ENCODE measurements at regions of chr2 and their contacts with region 1.

Region 1: DNA sequence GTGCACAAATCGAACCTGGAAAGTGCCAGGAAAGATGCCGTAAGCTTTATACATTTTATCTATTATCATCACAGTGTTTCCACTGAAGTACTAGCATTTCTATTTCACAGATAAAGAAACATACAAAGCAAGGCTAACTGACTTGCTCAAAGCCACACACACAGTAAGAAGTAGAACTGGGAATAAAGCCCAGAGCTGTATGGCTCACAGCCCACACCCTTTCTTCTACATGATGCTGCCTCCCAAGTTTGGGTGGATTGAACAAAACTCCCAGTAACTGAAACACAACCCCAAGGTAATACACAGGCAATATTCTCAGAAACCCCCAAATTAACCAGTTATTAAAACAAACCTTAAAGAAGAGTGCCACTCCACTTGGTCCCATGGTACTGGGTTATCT is 11.2 kb downstream of the SAP130 start:
- DNase-seq: no peak
- ATAC-seq: no peak
- H3K4me3 ChIP-seq: no peak overlapping the region
- H3K27ac ChIP-seq: no peak overlapping the region
- H3K4me1 ChIP-seq: no peaks in the 10 kb centered on the region
- H3K27me3 ChIP-seq: no peaks in the 10 kb centered on the region
- CTCF ChIP-seq: no peak

Region 2: DNA sequence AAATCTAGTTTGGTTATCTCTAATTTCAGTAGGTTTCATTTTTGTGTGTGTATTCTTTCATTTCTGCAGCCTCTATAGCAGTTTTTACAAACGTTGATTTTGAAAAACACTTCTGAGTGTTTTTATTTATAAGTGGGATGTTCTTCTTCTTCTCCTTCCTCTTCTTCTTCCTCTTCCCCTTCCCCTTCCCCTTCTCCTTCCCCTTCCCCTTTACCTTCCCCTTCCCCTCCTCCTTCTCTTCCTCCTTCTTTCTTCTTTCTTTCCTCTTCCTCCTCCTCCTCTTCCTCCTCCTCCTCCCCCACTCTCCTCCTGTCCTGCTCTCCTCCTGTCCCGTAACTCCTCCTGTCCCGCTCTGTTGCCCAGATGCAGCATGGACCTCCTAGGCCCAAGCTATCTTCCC is 78.6 kb after region 1 on chr2:
- CTCF ChIA-PET with region 1: no interaction called
- POLR2A ChIA-PET with region 1: interaction called, 10 read pairs
- in situ Hi-C with region 1: no loop called
- intact Hi-C with region 1: no loop called
- DNase-seq: no peak
- ATAC-seq: no peak
- H3K4me3 ChIP-seq: no peak overlapping the region
- H3K27ac ChIP-seq: no peak overlapping the region
- H3K4me1 ChIP-seq: peaks cover 9% of the 10 kb centered on the region; the same call in 1 of the 2 replicates
- H3K27me3 ChIP-seq: no peaks in the 10 kb centered on the region
- CTCF ChIP-seq: no peak

Region 3: DNA sequence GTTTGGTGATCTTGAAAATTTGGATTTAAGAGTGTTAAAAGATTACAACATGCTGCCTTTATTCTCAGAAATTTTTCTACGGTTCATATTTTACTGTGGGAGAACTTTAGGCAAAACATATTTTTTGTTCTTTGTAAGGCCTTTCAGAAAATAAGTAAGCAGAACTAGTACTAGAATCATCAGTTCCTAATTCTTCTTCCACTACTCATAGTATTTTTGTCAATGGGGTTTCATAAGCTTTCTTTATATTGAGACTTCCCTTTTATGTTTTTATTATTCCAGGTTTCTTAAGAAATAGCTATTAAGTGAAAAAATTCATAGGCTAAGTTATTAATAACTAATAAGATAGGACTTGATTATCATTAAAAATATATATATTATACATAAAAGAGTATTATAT is 86.8 kb after region 1 on chr2:
- CTCF ChIA-PET with region 1: interaction called, 11 read pairs
- POLR2A ChIA-PET with region 1: no interaction called
- in situ Hi-C with region 1: no loop called
- intact Hi-C with region 1: no loop called
- DNase-seq: no peak
- ATAC-seq: no peak
- H3K4me3 ChIP-seq: no peak overlapping the region
- H3K27ac ChIP-seq: no peak overlapping the region
- H3K4me1 ChIP-seq: no peaks in the 10 kb centered on the region
- H3K27me3 ChIP-seq: no peaks in the 10 kb centered on the region
- CTCF ChIP-seq: no peak

Region 4: GRCh38 chr2:128754246-128754724 is 737.7 kb after region 1 on chr2:
- CTCF ChIA-PET with region 1: no interaction called
- POLR2A ChIA-PET with region 1: no interaction called
- in situ Hi-C with region 1: no loop called
- intact Hi-C with region 1: no loop called
- DNase-seq: no peak
- ATAC-seq: no peak
- H3K4me3 ChIP-seq: no peak overlapping the region
- H3K27ac ChIP-seq: no peak overlapping the region
- H3K4me1 ChIP-seq: 0 out of 2 replicates have a peak, but pooled peaks cover 3% of the 10 kb centered on the region
- H3K27me3 ChIP-seq: no peaks in the 10 kb centered on the region
- CTCF ChIP-seq: no peak